Naive thymus-derived CD4-positive, alpha-beta T cell (primary cell): ENCODE measurements at regions of chr3 and their contacts with region 1.

Region 1: DNA sequence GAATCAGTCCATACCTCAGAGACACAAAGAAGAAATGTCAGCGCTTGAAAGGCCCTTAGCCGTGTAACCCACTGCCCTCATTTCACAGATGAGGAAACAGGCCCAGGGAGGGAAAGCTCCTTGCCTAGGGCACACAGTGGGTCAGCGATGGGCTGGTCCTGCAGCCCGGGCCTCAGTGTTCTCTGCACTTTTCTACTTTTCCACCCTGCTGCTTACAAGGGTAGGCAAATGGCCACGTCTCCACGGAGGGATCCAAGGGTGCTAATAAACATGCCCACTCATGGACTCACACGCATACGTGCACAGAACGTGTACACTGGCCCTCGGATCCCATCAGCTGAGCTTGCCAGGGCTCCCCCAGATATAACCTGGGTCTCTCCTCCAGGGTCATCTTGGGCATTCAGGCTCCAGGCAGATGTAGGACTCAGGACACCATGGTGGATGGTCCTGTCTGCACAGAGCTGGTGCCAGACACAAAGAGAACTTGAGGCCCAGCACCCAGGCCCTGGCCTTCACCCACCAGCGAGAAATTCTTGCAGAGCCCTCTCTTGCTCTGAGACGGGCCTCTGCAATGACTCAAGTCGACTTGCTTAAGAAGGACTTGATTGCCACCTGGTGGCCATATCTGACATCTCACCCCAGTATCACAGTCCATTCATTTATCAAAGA is 34.5 kb upstream of the VPS8 start:
- DNase-seq: peak; percentile 35 to 84 (median 78)
- ATAC-seq: peak; percentile 96
- H3K4me3 ChIP-seq: no peak overlapping the region
- H3K4me3 Mint-ChIP-seq: no peak overlapping the region
- H3K27ac ChIP-seq: no peak overlapping the region
- H3K27ac Mint-ChIP-seq: no peak overlapping the region
- H3K4me1 ChIP-seq: no peaks in the 10 kb centered on the region
- H3K4me1 Mint-ChIP-seq: peaks cover 0 to 3% (median 0%) of the 10 kb centered on the region in 7 donors
- H3K27me3 ChIP-seq: peaks cover 0 to 4% of the 10 kb centered on the region in 2 donors
- H3K27me3 Mint-ChIP-seq: peaks cover 6 to 28% (median 19%) of the 10 kb centered on the region in 5 donors

Region 2: DNA sequence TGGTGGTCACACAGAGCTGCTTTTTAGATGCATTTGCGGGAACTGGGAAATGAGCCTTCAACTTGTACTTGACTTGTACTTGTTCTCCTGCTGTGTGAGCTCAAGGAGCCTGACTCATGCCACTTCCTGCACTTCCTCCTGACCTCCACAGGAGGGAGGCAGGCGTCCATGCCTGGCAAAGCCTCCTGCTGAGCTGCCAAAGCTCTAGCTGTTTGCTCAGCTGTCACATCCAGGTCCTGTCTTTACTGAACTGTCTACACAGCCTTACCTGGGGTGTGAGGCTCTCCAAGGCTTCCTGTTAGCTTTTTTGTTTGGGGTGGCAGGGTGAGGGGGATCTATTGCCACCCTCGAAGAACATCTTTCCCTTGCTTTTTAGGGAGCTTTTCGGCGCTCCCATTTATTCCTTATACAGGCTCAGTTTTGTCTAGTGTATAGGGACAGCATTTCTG is 405.9 kb before region 1 on chr3:
- CTCF ChIA-PET with region 1: interaction called, 7 read pairs
- POLR2A ChIA-PET with region 1: no interaction called
- intact Hi-C with region 1: loop called in 1 of 2 experiments (anchors 5 kb)
- DNase-seq: peak; percentile 42 to 70 (median 59)
- ATAC-seq: peak; percentile 96
- H3K4me3 ChIP-seq: no peak overlapping the region
- H3K4me3 Mint-ChIP-seq: no peak overlapping the region
- H3K27ac ChIP-seq: no peak overlapping the region
- H3K27ac Mint-ChIP-seq: peak overlapping the region in 8 of 9 donors; percentile 4 to 65 (median 26)
- H3K4me1 ChIP-seq: no peaks in the 10 kb centered on the region
- H3K4me1 Mint-ChIP-seq: peaks cover 5 to 18% (median 10%) of the 10 kb centered on the region in 7 donors
- H3K27me3 ChIP-seq: no peaks in the 10 kb centered on the region
- H3K27me3 Mint-ChIP-seq: peaks cover 4 to 27% (median 8%) of the 10 kb centered on the region in 5 donors

Region 3: DNA sequence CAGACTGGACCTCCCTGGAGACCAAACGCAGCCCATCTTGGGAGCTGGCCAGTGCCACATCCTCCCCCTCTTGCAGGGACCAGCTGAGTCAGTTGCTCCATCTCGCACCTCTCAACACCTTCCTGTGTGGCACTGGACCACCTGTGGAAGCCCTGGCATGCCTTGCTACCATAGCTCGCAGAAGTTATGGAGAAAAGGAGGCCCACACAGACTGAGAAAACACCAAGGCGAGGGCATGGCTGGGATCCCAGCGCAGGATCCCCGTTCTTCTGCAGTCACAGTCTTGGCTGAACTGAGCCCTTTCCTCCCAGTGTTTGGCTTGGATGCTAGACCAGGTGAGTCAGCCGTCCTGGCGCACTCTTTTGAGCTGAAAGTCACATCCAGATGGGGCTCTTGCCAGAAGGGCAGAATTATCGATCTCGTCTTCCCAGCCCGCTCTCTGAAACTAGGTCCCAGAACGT is 350.8 kb before region 1 on chr3:
- CTCF ChIA-PET with region 1: no interaction called
- POLR2A ChIA-PET with region 1: no interaction called
- intact Hi-C with region 1: no loop called
- DNase-seq: no peak
- ATAC-seq: no peak
- H3K4me3 ChIP-seq: no peak overlapping the region
- H3K4me3 Mint-ChIP-seq: no peak overlapping the region
- H3K27ac ChIP-seq: no peak overlapping the region
- H3K27ac Mint-ChIP-seq: no peak overlapping the region
- H3K4me1 ChIP-seq: no peaks in the 10 kb centered on the region
- H3K4me1 Mint-ChIP-seq: no peaks in the 10 kb centered on the region
- H3K27me3 ChIP-seq: no peaks in the 10 kb centered on the region
- H3K27me3 Mint-ChIP-seq: peaks cover 5 to 25% (median 10%) of the 10 kb centered on the region in 5 donors

Region 4: DNA sequence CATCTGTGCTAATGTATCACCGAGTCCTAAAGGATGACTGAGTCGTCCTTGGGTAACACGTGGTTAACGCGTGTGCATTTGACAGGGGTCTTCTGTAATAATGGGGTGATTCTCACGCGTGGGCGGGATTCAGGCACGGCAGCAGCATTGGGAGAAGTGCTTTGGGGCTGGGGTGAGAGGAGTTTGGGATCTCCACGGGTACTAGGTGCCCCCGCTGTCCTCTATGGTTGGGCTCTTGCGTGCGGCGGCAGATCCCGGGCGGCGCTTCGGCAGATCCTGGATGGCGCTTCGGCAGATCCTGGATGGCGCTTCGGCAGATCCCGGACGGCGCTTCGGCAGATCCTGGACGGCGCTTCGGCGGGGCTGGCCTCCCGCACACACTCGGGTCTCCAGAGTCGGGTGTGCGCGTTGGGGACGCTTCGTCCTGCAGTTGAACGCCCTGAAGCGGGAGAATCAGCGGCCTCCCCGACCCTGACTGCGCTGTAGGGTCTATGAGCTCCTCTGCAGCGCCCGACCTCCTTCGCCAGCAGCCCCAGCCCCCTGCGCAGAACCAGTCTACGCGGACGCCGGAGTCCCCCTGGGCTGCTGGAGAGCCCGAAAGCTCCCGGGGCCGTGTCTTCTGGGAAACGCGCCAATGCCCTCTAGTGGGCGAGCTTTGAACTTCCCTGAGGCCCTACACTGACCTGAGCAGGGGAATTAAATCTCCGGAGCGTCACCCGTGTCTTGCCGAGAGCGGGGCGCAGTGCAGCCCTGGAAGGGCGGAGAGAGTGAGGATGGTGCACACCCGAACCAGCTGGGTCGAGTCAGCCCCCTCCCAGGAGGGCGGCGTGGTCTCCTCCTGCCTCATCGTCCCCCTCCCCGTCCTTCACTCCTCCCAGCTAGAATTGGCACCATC is 263.9 kb before region 1 on chr3:
- CTCF ChIA-PET with region 1: no interaction called
- POLR2A ChIA-PET with region 1: no interaction called
- intact Hi-C with region 1: loop called in 1 of 2 experiments (anchors 1 kb)
- DNase-seq: peak; percentile 59 to 83 (median 75)
- ATAC-seq: peak; percentile 99
- H3K4me3 ChIP-seq: peak overlapping the region; percentile 40
- H3K4me3 Mint-ChIP-seq: peak overlapping the region; percentile 12 to 81 (median 69)
- H3K27ac ChIP-seq: no peak overlapping the region
- H3K27ac Mint-ChIP-seq: no peak overlapping the region
- H3K4me1 ChIP-seq: no peaks in the 10 kb centered on the region
- H3K4me1 Mint-ChIP-seq: peaks cover 4 to 14% (median 11%) of the 10 kb centered on the region in 7 donors
- H3K27me3 ChIP-seq: peaks cover 0 to 4% of the 10 kb centered on the region in 2 donors
- H3K27me3 Mint-ChIP-seq: peaks cover 49 to 77% (median 63%) of the 10 kb centered on the region in 5 donors

Region 5: GRCh38 chr3:184636741-184637316 is 140.6 kb before region 1 on chr3:
- CTCF ChIA-PET with region 1: no interaction called
- POLR2A ChIA-PET with region 1: no interaction called
- intact Hi-C with region 1: loop called in 1 of 2 experiments (anchors 1 kb)
- DNase-seq: peak in 3 of 9 donors; percentile 10 to 58 (median 17)
- ATAC-seq: peak; percentile 39
- H3K4me3 ChIP-seq: no peak overlapping the region
- H3K4me3 Mint-ChIP-seq: peak overlapping the region in 4 of 10 donors; percentile 9 to 41 (median 35)
- H3K27ac ChIP-seq: no peak overlapping the region
- H3K27ac Mint-ChIP-seq: peak overlapping the region in 4 of 9 donors; percentile 56 to 81 (median 69)
- H3K4me1 ChIP-seq: peaks cover 3 to 25% of the 10 kb centered on the region in 2 donors
- H3K4me1 Mint-ChIP-seq: peaks cover 5 to 28% (median 6%) of the 10 kb centered on the region in 7 donors
- H3K27me3 ChIP-seq: no peaks in the 10 kb centered on the region
- H3K27me3 Mint-ChIP-seq: peaks cover 0 to 5% (median 0%) of the 10 kb centered on the region in 5 donors

Region 6: DNA sequence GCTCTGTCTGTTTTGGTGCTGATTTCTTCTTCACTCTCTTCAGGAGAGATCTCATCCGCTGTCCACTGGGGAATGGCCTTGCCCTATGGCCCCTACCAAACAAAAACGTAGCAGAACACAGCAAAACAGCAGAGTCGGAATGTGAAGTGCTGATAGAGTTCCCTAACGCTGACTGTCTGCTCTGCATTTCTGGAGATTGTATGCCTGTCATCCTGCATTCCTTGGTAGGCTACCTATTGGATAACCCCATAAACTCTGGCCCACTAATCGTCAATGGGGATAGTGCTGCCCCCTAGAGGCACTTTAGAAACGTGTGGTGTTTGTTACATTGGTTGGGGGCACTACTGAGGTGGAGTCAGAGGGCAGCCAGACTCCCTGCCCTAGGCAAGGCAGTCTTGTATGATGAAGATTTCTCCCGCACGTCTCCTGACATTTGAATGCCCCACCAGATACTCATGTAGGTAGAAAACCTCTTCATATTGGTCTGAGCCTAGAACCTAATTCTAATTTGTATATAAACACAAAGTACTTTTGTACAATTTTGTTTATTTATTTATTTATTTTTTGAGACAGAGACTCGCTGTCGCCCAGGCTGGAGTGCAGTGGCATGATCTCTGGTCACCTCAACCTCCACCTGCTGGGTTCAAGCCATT is 50.0 kb before region 1 on chr3:
- CTCF ChIA-PET with region 1: interaction called, 3 read pairs
- POLR2A ChIA-PET with region 1: no interaction called
- intact Hi-C with region 1: loop called (anchors 1 kb)
- DNase-seq: peak in 8 of 9 donors; percentile 12 to 45 (median 34)
- ATAC-seq: peak; percentile 85
- H3K4me3 ChIP-seq: no peak overlapping the region
- H3K4me3 Mint-ChIP-seq: no peak overlapping the region
- H3K27ac ChIP-seq: no peak overlapping the region
- H3K27ac Mint-ChIP-seq: peak overlapping the region in 2 of 9 donors; percentile 37 to 44
- H3K4me1 ChIP-seq: no peaks in the 10 kb centered on the region
- H3K4me1 Mint-ChIP-seq: peaks cover 0 to 4% (median 0%) of the 10 kb centered on the region in 7 donors
- H3K27me3 ChIP-seq: no peaks in the 10 kb centered on the region
- H3K27me3 Mint-ChIP-seq: peaks cover 0 to 39% (median 6%) of the 10 kb centered on the region in 5 donors

Region 7: DNA sequence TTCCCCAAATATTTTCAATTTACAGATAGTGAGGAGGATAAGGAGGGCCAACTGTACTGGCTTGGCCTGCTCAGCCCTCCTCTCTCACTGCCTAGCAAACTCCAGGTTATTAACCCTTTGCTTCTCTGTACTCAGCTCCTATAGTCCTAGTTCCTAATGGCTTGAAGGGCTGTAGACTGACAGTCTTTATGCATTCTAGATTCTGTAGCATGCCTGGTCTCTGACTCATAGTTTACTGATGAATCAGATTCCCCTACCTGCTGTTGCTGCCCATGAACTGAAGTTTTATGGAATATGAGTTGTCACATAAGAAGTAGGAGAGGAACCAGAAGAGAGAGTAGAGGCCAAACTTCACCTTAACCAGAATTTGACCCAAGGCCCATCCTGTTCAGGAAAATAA is 558.3 kb after region 1 on chr3:
- CTCF ChIA-PET with region 1: no interaction called
- POLR2A ChIA-PET with region 1: no interaction called
- intact Hi-C with region 1: no loop called
- DNase-seq: no peak
- ATAC-seq: no peak
- H3K4me3 ChIP-seq: no peak overlapping the region
- H3K4me3 Mint-ChIP-seq: no peak overlapping the region
- H3K27ac ChIP-seq: no peak overlapping the region
- H3K27ac Mint-ChIP-seq: no peak overlapping the region
- H3K4me1 ChIP-seq: no peaks in the 10 kb centered on the region
- H3K4me1 Mint-ChIP-seq: peaks cover 0 to 19% (median 0%) of the 10 kb centered on the region in 7 donors
- H3K27me3 ChIP-seq: peaks cover 0 to 3% of the 10 kb centered on the region in 2 donors
- H3K27me3 Mint-ChIP-seq: peaks cover 0 to 4% (median 3%) of the 10 kb centered on the region in 5 donors

Region 8: GRCh38 chr3:185958626-185959025 is 1181.2 kb after region 1 on chr3:
- CTCF ChIA-PET with region 1: no interaction called
- POLR2A ChIA-PET with region 1: no interaction called
- intact Hi-C with region 1: no loop called
- DNase-seq: no peak
- ATAC-seq: no peak
- H3K4me3 ChIP-seq: no peak overlapping the region
- H3K4me3 Mint-ChIP-seq: no peak overlapping the region
- H3K27ac ChIP-seq: no peak overlapping the region
- H3K27ac Mint-ChIP-seq: peak overlapping the region in 1 of 9 donors; percentile 74
- H3K4me1 ChIP-seq: peaks cover 0 to 8% of the 10 kb centered on the region in 2 donors
- H3K4me1 Mint-ChIP-seq: peaks cover 0 to 10% (median 8%) of the 10 kb centered on the region in 7 donors
- H3K27me3 ChIP-seq: no peaks in the 10 kb centered on the region
- H3K27me3 Mint-ChIP-seq: peaks cover 0 to 13% (median 4%) of the 10 kb centered on the region in 5 donors